SK-N-SH (cell line): ENCODE measurements at regions of chrX and their contacts with region 1.

Region 1: DNA sequence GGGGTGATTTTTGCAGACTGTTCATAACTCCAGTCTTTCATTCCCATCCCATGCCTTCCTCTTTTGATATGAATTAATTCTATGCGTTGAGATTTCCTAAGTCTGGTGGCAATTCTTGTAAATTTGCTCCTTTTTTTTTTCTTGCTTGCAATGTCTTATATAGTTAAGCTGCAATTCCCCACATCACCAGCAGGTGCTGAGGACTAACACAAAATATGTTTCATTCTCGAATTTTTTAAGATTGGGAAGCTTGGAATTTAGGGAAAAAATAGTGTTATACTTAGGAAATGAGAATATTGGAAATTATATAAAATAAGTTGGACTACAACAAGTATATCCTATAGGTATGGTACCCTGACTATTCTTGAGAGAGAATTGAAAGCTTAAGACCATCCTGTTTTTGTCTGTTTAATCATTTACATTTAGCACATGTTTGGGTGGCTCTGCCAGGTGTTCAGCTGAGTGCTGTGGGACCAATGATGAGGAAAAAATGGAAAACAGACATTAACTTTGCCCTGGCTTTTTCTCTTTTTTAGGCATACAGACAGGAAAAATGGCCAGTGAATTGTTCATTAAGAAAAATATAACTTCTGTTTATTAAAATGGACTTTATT is 30.2 kb downstream of the AFF2 start:
- DNase-seq: no peak
- H3K4me3 ChIP-seq: peak overlapping the region in 1 of 2 experiments; percentile 29; a peak in 1 of 4 replicates
- H3K27ac ChIP-seq: no peak overlapping the region
- H3K4me1 ChIP-seq: no peaks in the 10 kb centered on the region
- H3K27me3 ChIP-seq: no peaks in the 10 kb centered on the region
- CTCF ChIP-seq: peak; percentile 84
- EP300 ChIP-seq: no peak
- RAD21 ChIP-seq: no peak

Region 2: DNA sequence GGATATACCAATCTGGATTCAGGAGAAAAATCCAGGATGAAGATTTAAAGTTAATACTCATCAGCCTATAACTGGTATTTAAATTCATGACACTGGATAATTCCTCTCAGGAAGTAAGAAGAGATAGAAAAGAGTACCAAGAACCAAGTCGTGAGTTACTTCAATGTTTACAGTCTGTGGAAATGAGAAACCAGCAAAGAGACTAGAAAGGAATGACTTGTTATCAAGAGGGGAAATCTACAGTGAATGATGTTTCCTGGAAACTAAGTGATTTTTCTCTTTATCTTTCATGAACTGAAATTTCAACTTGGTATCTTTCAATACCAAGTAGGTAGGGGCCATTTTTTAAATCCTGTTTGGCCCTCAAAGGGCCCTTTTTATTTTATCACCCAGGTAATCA is 248.1 kb before region 1 on chrX:
- CTCF ChIA-PET with region 1: no interaction called
- POLR2A ChIA-PET with region 1: no interaction called
- DNase-seq: no peak
- H3K4me3 ChIP-seq: no peak overlapping the region
- H3K27ac ChIP-seq: no peak overlapping the region
- H3K4me1 ChIP-seq: no peaks in the 10 kb centered on the region
- H3K27me3 ChIP-seq: no peaks in the 10 kb centered on the region
- CTCF ChIP-seq: no peak
- EP300 ChIP-seq: no peak
- RAD21 ChIP-seq: no peak

Region 3: GRCh38 chrX:148417934-148418333 is 112.6 kb before region 1 on chrX:
- CTCF ChIA-PET with region 1: no interaction called
- POLR2A ChIA-PET with region 1: no interaction called
- DNase-seq: no peak
- H3K4me3 ChIP-seq: no peak overlapping the region
- H3K27ac ChIP-seq: no peak overlapping the region
- H3K4me1 ChIP-seq: no peaks in the 10 kb centered on the region
- H3K27me3 ChIP-seq: no peaks in the 10 kb centered on the region
- CTCF ChIP-seq: no peak
- EP300 ChIP-seq: no peak
- RAD21 ChIP-seq: no peak

Region 4: GRCh38 chrX:148517176-148517575 is 13.4 kb before region 1 on chrX:
- CTCF ChIA-PET with region 1: interaction called, 10 read pairs
- POLR2A ChIA-PET with region 1: no interaction called
- DNase-seq: no peak
- H3K4me3 ChIP-seq: no peak overlapping the region
- H3K27ac ChIP-seq: no peak overlapping the region
- H3K4me1 ChIP-seq: no peaks in the 10 kb centered on the region
- H3K27me3 ChIP-seq: no peaks in the 10 kb centered on the region
- CTCF ChIP-seq: no peak
- EP300 ChIP-seq: no peak
- RAD21 ChIP-seq: no peak

Region 5: DNA sequence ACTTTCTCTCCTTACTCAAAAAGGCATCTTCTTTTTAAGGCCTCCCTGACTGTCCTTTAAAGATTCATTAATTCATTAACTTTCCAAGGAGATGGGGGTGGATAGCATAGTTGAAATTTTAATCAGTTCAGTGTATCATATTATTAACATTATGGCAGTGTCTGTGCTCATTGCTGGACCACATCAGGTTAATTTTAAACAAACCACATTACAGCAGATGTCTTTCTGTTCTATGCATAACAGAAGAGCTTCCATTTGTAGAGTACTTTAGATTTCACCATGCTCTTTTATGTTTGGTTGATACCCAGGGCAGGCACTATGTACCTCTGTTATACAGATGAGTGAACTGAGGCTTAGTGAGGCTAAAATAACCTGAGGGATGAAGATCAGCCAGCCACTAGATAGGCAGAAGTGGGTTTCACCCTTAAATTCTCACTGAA is 11.0 kb after region 1 on chrX:
- CTCF ChIA-PET with region 1: interaction called, 42 read pairs
- POLR2A ChIA-PET with region 1: no interaction called
- DNase-seq: no peak
- H3K4me3 ChIP-seq: no peak overlapping the region
- H3K27ac ChIP-seq: no peak overlapping the region
- H3K4me1 ChIP-seq: no peaks in the 10 kb centered on the region
- H3K27me3 ChIP-seq: no peaks in the 10 kb centered on the region
- CTCF ChIP-seq: no peak
- EP300 ChIP-seq: no peak
- RAD21 ChIP-seq: no peak